Naive thymus-derived CD8-positive, alpha-beta T cell (primary cell): ENCODE measurements at regions of chr4 and their contacts with region 1.

Region 1: GRCh38 chr4:56435306-56435926 is at the start of gene PPAT:
- DNase-seq: peak; percentile 98 to 99 (median 99)
- ATAC-seq: peak; percentile 78 to 82
- H3K4me3 Mint-ChIP-seq: peak within 1 kb of the TSS; percentile 84 to 100 (median 94)
- H3K27ac Mint-ChIP-seq: peak within 1 kb of the TSS; percentile 86 to 99 (median 92)
- H3K4me1 Mint-ChIP-seq: peaks cover 28 to 46% (median 42%) of the 10 kb centered on the region in 4 donors
- H3K27me3 Mint-ChIP-seq: no peaks in the 10 kb centered on the region
- polyA plus RNA-seq, gene PPAT: 10.9 to 15.2 (median 11.7) TPM

Region 2: DNA sequence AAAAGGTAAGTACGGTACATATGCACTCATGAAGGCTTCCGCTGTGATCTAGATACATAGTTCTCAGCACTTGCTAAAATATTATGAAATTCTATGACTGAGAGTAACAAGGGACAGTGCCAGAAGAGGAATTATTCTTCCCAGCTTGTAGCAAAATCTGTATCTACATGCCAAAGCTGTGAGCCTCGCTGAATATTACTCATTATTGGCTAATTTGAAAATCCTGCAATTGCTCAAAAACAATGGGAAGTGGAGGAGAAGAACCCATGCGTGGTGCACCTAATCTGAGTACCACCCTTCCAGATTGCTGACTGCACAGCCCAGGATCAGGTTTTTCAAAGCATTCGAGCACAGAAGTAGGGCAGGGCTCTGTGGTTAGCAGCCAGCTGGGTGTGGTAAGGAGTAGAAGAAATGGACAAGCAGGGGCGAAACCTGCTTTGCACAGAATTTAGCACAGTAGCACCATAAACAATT is 826.0 kb before region 1 on chr4:
- POLR2A ChIA-PET with region 1: no interaction called
- DNase-seq: no peak
- ATAC-seq: no peak
- H3K4me3 Mint-ChIP-seq: no peak overlapping the region
- H3K27ac Mint-ChIP-seq: peak overlapping the region in 1 of 10 donors; percentile 70
- H3K4me1 Mint-ChIP-seq: peaks cover 0 to 6% (median 3%) of the 10 kb centered on the region in 4 donors
- H3K27me3 Mint-ChIP-seq: peaks cover 2 to 7% (median 6%) of the 10 kb centered on the region in 5 donors

Region 3: DNA sequence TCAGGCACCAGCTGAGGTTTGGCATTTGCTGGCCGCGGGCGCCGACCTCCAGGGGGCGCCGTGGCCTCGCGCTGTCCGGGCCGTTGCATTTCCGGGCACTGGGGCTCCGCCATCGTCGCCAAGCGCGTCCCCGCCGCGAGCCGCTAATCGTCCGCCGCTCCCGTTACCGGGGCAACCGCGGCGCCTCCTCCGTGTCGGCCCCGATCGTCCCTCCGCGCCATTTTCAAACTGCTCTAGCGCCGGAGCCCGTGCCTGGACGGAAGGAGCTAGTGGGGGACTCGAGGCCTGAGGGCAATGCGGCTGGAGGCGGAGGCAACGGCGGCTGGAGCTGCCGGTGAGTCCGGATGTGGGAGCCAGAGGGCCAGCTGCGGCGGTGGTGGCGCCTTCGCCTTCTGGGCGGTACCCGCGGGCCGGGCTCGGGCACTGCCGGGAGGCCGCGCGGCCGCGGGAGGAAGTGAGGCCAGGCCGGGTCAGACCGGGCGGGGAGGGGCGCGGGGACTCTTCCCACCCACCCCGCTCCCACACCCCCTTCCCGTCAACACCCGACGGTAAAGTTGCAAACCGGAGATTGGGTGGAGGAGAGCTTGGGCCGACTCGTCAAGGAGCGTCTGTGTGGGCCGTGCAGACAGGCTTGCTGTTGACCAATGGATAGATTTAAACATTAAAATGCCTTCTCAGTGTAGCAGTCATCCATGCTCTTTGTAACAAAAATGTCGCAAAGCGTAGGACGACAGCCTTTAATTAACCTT is 486.5 kb before region 1 on chr4 and contains the start of gene CEP135:
- POLR2A ChIA-PET with region 1: interaction called, 15 read pairs
- DNase-seq: peak; percentile 83 to 94 (median 90)
- ATAC-seq: peak; percentile 69 to 78
- H3K4me3 Mint-ChIP-seq: peak within 1 kb of the TSS; percentile 82 to 99 (median 92)
- H3K27ac Mint-ChIP-seq: peak within 1 kb of the TSS; percentile 91 to 98 (median 96)
- H3K4me1 Mint-ChIP-seq: peaks cover 26 to 56% (median 39%) of the 10 kb centered on the region in 4 donors
- H3K27me3 Mint-ChIP-seq: no peaks in the 10 kb centered on the region
- polyA plus RNA-seq, gene CEP135: 7.9 to 13.8 (median 8.3) TPM

Region 4: GRCh38 chr4:56106180-56107147 is 329.0 kb before region 1 on chr4:
- POLR2A ChIA-PET with region 1: no interaction called
- DNase-seq: no peak
- ATAC-seq: no peak
- H3K4me3 Mint-ChIP-seq: no peak overlapping the region
- H3K27ac Mint-ChIP-seq: no peak overlapping the region
- H3K4me1 Mint-ChIP-seq: no peaks in the 10 kb centered on the region
- H3K27me3 Mint-ChIP-seq: peaks cover 0 to 2% (median 0%) of the 10 kb centered on the region in 5 donors

Region 5: GRCh38 chr4:56387023-56388001 is 48.1 kb before region 1 on chr4 and contains the start of gene AASDH:
- POLR2A ChIA-PET with region 1: interaction called, 47 read pairs
- DNase-seq: peak; percentile 87 to 99 (median 96)
- ATAC-seq: peak; percentile 87 to 90
- H3K4me3 Mint-ChIP-seq: peak within 1 kb of the TSS; percentile 87 to 96 (median 93)
- H3K27ac Mint-ChIP-seq: peak within 1 kb of the TSS; percentile 97 to 100 (median 98)
- H3K4me1 Mint-ChIP-seq: peaks cover 29 to 49% (median 45%) of the 10 kb centered on the region in 4 donors
- H3K27me3 Mint-ChIP-seq: no peaks in the 10 kb centered on the region
- polyA plus RNA-seq, gene AASDH: 20.8 to 31.4 (median 22.5) TPM

Region 6: DNA sequence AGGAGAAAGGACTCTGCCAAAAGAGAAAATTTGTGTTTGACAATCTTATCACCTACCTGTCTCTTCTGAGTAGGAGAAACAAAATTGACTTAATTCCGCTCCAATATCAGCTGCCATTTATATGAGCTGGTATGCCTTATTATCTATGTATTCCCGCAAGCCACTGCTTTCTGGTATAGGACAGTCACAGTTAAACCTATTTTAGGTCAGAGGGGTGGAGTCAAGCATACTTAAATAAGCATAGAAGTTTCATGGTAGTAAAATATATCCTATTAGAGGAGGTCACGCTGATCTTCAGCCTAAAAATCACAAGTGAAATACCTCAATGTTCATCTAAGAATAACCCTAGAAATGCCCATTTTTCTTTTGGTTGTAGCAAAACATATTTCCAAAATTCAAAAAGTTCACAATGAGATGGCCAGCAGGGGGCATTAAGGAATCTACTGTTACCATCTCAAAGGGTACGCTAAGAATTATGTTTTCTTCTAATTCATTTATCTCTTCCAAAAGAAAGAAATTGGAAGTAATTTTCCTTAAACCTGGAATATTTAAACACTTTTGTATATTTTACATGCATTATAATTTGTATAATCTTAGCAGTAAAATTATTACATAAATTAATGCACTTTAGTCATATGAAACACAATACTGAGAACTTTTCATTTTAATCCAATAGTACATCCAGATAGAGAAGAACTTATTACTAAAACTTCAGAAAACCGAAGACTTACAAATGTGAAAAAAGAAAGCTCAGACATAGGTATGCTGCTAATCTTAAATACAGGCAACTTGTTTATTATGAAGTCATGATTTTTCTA is 10.5 kb before region 1 on chr4:
- POLR2A ChIA-PET with region 1: interaction called, 20 read pairs
- DNase-seq: peak in 9 of 10 donors; percentile 19 to 65 (median 46)
- ATAC-seq: peak in 1 of 2 donors; percentile 39
- H3K4me3 Mint-ChIP-seq: no peak overlapping the region
- H3K27ac Mint-ChIP-seq: no peak overlapping the region
- H3K4me1 Mint-ChIP-seq: peaks cover 1 to 6% (median 6%) of the 10 kb centered on the region in 4 donors
- H3K27me3 Mint-ChIP-seq: no peaks in the 10 kb centered on the region

Region 7: DNA sequence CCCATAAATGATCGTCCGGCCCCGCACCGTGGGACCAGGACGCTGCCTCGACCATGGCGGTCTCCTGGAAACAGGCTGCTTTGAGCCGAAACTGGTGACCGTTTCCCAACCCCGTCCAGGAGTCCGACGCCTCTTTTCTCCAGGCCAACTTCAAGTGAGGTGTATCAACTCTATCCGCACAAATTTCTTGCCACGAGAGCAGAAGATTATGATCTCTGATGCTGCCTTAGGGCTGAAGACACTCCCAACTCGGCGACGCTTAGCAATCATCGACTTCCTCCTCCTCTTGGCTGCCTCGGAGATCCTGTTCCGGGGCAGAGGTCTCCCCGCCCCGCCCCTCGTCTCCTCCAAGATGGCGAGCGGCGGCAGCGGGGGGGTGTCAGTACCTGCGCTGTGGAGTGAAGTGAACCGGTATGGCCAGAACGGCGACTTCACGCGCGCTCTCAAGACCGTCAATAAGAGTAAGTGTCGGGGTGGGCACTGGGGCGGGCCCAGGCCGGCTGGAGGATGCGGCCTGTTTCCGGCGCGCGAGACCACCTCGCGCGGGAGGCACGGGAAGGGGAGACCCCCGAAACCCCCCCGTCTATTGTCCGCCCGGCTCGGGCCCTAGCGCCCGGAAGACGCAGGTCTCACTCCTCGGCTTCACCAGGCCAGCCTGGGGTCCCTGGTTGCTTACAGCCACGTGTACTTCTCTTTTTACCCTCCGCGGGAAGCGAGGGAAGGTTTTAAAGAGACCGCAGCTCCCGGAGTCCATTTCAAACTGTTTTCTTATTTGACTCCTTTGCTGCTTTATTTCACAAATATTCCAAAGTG is 32.1 kb after region 1 on chr4 and contains the start of gene SRP72:
- POLR2A ChIA-PET with region 1: interaction called, 85 read pairs
- DNase-seq: peak; percentile 84 to 96 (median 90)
- ATAC-seq: peak; percentile 96 to 97
- H3K4me3 Mint-ChIP-seq: peak within 1 kb of the TSS; percentile 92 to 100 (median 99)
- H3K27ac Mint-ChIP-seq: peak within 1 kb of the TSS; percentile 94 to 100 (median 98)
- H3K4me1 Mint-ChIP-seq: peaks cover 22 to 73% (median 66%) of the 10 kb centered on the region in 4 donors
- H3K27me3 Mint-ChIP-seq: no peaks in the 10 kb centered on the region
- polyA plus RNA-seq, gene SRP72: 152 to 174 (median 170) TPM

Region 8: DNA sequence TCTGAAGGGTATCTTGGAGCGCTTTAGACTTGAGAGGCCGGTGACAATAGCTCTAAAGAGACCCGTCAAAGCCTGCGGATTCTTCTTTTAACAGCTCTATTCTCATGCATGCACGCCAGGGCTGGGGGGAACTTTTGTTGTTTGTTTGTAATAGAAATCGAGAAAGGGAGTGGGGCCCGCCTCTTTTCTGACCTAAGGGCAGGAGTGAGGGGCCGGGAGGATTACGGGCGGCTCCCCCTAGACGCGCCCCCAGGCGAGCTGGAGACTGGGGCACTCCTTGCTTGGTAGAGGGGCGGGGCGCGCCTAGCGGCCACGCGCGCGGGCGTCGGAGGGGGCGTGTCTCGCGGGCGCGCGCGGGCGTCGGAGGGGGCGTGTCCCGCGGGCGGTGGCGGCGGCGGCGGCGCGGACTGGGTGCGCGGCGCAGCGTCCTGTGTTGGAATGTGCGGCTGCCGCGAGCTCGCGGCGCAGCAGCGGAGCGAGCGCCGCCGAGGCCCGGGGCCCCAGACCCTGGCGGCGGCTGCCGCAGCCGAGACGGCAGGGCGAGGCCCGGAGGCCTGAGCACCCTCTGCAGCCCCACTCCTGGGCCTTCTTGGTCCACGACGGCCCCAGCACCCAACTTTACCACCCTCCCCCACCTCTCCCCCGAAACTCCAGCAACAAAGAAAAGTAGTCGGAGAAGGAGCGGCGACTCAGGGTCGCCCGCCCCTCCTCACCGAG is 472.2 kb after region 1 on chr4 and contains the start of gene REST:
- POLR2A ChIA-PET with region 1: interaction called, 34 read pairs
- DNase-seq: peak; percentile 73 to 92 (median 86)
- ATAC-seq: peak; percentile 64 to 70
- H3K4me3 Mint-ChIP-seq: peak within 1 kb of the TSS; percentile 85 to 98 (median 96)
- H3K27ac Mint-ChIP-seq: peak within 1 kb of the TSS; percentile 86 to 96 (median 92)
- H3K4me1 Mint-ChIP-seq: peaks cover 16 to 50% (median 43%) of the 10 kb centered on the region in 4 donors
- H3K27me3 Mint-ChIP-seq: no peaks in the 10 kb centered on the region
- polyA plus RNA-seq, gene REST: 139 to 155 (median 149) TPM

Region 9: GRCh38 chr4:56977321-56978012 is 542.1 kb after region 1 on chr4 and contains the start of gene NOA1:
- POLR2A ChIA-PET with region 1: interaction called, 43 read pairs
- DNase-seq: peak; percentile 92 to 99 (median 98)
- ATAC-seq: peak; percentile 85 to 87
- H3K4me3 Mint-ChIP-seq: peak within 1 kb of the TSS; percentile 98 to 100 (median 99)
- H3K27ac Mint-ChIP-seq: peak within 1 kb of the TSS; percentile 95 to 99 (median 97)
- H3K4me1 Mint-ChIP-seq: peaks cover 15 to 75% (median 58%) of the 10 kb centered on the region in 4 donors
- H3K27me3 Mint-ChIP-seq: no peaks in the 10 kb centered on the region
- polyA plus RNA-seq, gene NOA1: 17.8 to 24.6 (median 20.6) TPM